H1 (cell line): ENCODE measurements at regions of chr5 and their contacts with region 1.

Region 1: DNA sequence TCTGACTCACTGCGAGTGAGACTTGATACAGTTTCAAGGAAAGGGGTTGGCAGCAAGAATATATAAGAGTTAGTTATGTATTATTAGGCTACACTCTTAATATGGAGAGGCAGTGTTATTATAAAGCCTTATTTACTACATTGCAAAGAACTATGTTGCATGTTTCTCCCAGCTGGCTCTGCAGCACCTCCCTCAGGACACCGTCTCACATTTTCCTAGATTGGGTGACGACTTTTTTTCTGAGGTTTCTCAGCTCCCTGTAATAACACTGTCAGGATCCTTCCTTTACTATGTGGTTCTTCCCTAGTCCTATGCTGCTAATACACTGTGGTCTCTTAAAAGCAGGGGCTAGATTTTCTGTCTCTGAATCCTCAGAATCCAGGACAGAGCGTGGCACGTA is 153.7 kb downstream of the INSYN2B start:
- DNase-seq: no peak
- H3K4me3 ChIP-seq: no peak overlapping the region
- H3K27ac ChIP-seq: no peak overlapping the region
- H3K4me1 ChIP-seq: peaks cover 0 to 3% (median 0%) of the 10 kb centered on the region in 4 experiments; a peak in 1 of 7 replicates
- H3K27me3 ChIP-seq: no peaks in the 10 kb centered on the region
- CTCF ChIP-seq: peak; percentile 43 to 68 (median 49)
- EP300 ChIP-seq: no peak
- POLR2A ChIP-seq: no peak
- RAD21 ChIP-seq: peak; percentile 70 to 75

Region 2: DNA sequence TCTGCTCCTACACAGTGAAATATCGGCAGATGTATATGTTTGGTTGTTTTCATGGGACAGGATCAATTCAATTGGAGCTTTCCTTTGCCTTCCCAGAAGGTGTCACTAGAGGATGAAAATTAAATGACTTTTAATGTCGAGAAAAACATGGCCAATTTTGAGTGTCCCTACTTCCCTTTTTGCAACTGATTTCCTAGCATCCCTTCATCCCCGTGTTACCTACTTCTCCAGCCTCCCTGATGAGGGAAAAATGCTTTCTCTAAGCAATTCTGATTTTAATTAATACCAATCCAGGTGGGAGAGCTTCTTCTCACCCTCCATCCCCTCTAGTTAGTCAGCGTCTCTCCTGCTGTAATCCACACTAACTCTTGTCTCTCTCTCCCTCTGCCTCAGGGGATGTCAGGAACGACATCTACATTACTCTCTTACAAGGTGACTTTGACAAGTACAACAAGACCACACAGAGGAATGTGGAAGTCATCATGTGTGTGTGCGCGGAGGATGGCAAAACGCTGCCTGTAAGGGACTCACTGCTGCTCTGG is 124.6 kb before region 1 on chr5:
- CTCF ChIA-PET with region 1: interaction called, 15 read pairs
- POLR2A ChIA-PET with region 1: no interaction called
- DNase-seq: no peak
- H3K4me3 ChIP-seq: no peak overlapping the region
- H3K27ac ChIP-seq: no peak overlapping the region
- H3K4me1 ChIP-seq: no peaks in the 10 kb centered on the region
- H3K27me3 ChIP-seq: no peaks in the 10 kb centered on the region
- CTCF ChIP-seq: peak in 2 of 3 experiments; percentile 31 to 54; a peak in 2 of 4 replicates
- EP300 ChIP-seq: no peak
- POLR2A ChIP-seq: no peak
- RAD21 ChIP-seq: peak; percentile 66 to 74

Region 3: DNA sequence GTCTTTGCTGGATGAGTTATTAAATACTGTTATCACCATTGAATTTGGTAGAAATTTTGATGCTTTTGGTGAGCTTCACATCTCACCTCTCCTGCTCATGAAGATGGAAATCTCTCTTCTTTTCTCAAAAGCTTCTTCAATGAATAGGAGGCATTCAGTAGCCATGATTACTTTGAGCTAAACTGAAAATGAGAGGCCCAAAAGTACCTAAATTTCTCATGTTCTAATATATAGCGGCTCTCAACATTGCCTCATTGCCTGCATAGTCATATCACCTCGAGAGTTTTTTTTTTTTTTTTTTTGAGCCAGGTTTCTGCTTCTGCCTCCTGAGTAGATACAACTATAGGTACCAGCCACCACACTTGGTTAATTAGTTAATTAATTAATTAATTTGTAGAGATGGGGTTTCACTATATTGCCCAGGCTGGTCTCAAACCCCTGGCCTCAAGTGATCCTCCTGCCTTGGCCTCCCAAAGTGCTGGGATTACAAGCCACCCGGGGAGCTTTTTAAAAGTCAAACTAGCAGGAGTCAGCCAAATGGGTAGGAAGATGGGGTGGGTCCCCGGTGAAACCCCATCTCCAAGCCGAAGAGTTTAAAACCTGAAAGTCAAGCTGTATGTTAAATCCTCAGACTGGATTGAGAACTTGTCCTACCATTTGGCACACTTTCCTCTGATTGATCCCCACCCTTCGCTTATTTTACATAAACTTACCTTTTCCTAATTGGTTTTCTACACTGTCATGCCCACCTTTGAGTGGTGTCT is 20.5 kb before region 1 on chr5:
- CTCF ChIA-PET with region 1: interaction called, 18 read pairs
- POLR2A ChIA-PET with region 1: no interaction called
- DNase-seq: no peak
- H3K4me3 ChIP-seq: no peak overlapping the region
- H3K27ac ChIP-seq: no peak overlapping the region
- H3K4me1 ChIP-seq: peaks cover 0 to 22% (median 17%) of the 10 kb centered on the region in 4 experiments; a peak in 6 of 7 replicates
- H3K27me3 ChIP-seq: peaks cover 0 to 2% (median 0%) of the 10 kb centered on the region in 4 experiments; a peak in 1 of 7 replicates
- CTCF ChIP-seq: no peak
- EP300 ChIP-seq: no peak
- POLR2A ChIP-seq: no peak
- RAD21 ChIP-seq: no peak

Region 4: DNA sequence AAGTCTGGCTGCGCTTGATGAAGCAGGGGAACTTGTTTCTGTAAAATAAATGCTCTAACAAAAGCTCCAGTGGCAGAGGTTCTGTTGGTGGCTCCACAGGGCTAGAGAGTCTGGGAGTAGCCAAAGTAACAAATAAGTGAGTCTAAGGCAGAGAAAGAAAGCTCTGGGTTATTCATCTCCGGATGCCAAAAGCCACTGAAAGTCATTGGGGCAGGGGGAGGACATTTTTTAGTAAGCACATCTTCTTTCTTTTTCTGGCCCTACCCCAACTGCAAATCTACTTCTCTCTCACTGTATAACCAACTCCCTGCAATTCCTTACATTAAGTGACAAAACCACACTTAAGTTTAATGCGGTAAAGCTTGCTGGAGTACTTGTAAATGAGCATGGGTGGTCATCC is 12.1 kb after region 1 on chr5:
- CTCF ChIA-PET with region 1: interaction called, 13 read pairs
- POLR2A ChIA-PET with region 1: no interaction called
- DNase-seq: no peak
- H3K4me3 ChIP-seq: no peak overlapping the region
- H3K27ac ChIP-seq: no peak overlapping the region
- H3K4me1 ChIP-seq: peaks cover 0 to 3% (median under 1%) of the 10 kb centered on the region in 4 experiments; a peak in 1 of 7 replicates
- H3K27me3 ChIP-seq: no peaks in the 10 kb centered on the region
- CTCF ChIP-seq: no peak
- EP300 ChIP-seq: no peak
- POLR2A ChIP-seq: no peak
- RAD21 ChIP-seq: no peak

Region 5: DNA sequence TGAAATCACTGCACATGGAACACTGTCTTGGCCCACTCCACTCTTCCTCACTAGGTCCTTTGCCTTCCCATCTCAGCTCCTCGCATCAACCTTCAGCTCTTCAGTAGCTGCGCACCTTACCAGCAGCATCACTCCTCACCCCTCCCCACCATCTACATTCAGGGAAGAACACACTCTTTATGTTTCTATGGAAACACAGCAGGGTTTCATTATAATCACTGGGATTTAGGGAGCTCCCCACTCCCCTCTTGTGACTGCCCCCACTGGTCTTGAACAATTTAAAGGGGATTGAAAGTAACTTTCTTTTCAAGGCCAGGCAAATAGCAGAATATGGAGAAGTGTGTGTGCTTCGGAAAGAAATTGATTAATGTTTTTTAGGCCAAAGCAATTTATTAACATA is 42.4 kb after region 1 on chr5:
- CTCF ChIA-PET with region 1: no interaction called
- POLR2A ChIA-PET with region 1: no interaction called
- DNase-seq: no peak
- H3K4me3 ChIP-seq: no peak overlapping the region
- H3K27ac ChIP-seq: no peak overlapping the region
- H3K4me1 ChIP-seq: peaks cover 0 to 5% (median 3%) of the 10 kb centered on the region in 4 experiments; a peak in 5 of 7 replicates
- H3K27me3 ChIP-seq: peaks cover 0 to 2% (median 0%) of the 10 kb centered on the region in 4 experiments; a peak in 1 of 7 replicates
- CTCF ChIP-seq: no peak
- EP300 ChIP-seq: no peak
- POLR2A ChIP-seq: no peak
- RAD21 ChIP-seq: no peak

Region 6: GRCh38 chr5:169988947-169989346 is 162.3 kb after region 1 on chr5:
- CTCF ChIA-PET with region 1: no interaction called
- POLR2A ChIA-PET with region 1: no interaction called
- DNase-seq: no peak
- H3K4me3 ChIP-seq: no peak overlapping the region
- H3K27ac ChIP-seq: no peak overlapping the region
- H3K4me1 ChIP-seq: no peaks in the 10 kb centered on the region
- H3K27me3 ChIP-seq: no peaks in the 10 kb centered on the region; a peak in 1 of 7 replicates
- CTCF ChIP-seq: no peak
- EP300 ChIP-seq: no peak
- POLR2A ChIP-seq: no peak
- RAD21 ChIP-seq: no peak

Region 7: GRCh38 chr5:170034231-170034630 is 207.6 kb after region 1 on chr5:
- CTCF ChIA-PET with region 1: no interaction called
- POLR2A ChIA-PET with region 1: no interaction called
- DNase-seq: no peak
- H3K4me3 ChIP-seq: no peak overlapping the region
- H3K27ac ChIP-seq: no peak overlapping the region
- H3K4me1 ChIP-seq: no peaks in the 10 kb centered on the region
- H3K27me3 ChIP-seq: no peaks in the 10 kb centered on the region
- CTCF ChIP-seq: no peak
- EP300 ChIP-seq: no peak
- POLR2A ChIP-seq: no peak
- RAD21 ChIP-seq: no peak